ENCODE measurements at regions of chr2 and their contacts with region 1.

Region 1: DNA sequence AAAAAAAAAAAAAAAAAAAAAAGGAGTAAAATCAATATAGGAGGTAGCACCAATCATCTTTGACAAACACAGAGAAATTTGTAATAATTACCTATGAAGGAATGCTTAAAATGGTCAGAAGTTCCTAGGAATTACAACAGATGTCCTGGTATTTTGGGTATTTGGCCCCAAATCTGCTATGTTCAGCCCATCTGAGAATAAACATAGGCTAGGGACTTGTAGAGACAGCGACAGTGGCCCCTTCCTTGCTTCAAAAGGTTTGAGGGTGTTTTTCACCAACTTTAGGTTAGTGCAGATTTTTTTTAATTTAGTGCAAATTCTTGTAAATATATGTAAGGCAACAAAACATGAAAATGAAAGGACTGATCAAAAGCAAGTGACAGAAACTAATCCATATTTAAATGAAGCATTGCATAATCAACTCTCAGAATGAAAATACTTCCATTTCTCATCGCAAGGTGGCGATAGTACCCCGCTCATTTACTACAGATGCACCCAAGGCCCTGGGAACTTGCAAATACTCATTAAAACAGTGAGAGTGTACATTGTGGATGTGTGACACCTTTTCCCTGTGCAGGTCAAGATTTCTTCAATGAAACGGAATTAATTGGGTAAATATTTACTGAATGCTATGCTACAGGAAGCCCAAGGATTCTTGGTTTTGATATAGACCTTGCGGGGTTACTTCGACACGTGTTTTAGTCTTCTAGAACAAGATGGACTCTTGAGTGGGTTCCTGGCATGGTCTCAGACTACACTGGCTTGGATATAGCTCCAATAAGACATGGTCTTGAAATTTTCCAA is 44.6 kb downstream of the FAM124B start:
- DNase-seq: peak in 2 of 10 donors; percentile 34 to 60
- H3K4me3 ChIP-seq: no peak overlapping the region
- H3K27ac ChIP-seq: no peak overlapping the region
- H3K27me3 ChIP-seq: no peaks in the 10 kb centered on the region
- CTCF ChIP-seq: peak; percentile 80 to 98 (median 90)

Region 2: DNA sequence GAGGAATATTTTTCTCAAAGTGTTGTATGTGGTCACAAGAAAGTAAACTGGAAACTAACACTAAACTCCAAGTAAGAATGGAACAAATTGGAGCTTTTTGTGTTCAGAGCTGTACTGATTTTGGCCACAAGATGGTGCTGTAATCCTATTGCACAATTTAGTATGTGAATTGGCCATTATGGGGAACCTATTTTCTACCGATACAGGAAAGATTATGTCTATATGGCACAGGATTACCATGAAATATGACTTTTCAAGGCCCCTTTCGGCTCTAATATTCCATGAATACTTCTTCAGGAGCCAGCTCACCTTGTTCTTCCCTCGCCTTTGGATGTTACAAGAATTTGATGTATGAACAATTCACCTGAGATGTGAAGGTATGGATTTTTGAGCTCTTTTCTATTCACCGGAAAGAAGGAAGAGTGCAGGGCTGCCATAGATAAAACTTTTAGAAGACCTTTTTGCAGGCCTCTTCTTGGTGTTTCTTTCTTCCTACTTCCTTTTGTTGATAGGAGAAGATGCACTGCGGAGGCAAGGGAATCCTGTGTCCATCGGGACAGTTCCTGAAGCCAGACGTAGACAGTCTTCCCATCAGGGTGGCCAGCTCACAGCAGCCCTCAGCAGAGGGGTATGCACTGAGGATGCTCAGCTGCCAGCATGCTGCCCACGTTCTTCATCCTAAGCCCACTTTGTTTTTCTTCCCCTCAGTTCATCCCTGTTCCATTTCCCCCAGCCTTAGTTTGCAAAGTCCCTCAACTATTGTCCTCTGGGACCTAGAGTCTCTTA is 386.8 kb before region 1 on chr2:
- intact Hi-C with region 1: loop called in 1 of 2 experiments (anchors 5 kb)
- DNase-seq: peak in 2 of 10 donors; percentile 23 to 43
- H3K4me3 ChIP-seq: no peak overlapping the region
- H3K27ac ChIP-seq: no peak overlapping the region
- H3K27me3 ChIP-seq: no peaks in the 10 kb centered on the region
- CTCF ChIP-seq: peak; percentile 83 to 99 (median 96)

Region 3: DNA sequence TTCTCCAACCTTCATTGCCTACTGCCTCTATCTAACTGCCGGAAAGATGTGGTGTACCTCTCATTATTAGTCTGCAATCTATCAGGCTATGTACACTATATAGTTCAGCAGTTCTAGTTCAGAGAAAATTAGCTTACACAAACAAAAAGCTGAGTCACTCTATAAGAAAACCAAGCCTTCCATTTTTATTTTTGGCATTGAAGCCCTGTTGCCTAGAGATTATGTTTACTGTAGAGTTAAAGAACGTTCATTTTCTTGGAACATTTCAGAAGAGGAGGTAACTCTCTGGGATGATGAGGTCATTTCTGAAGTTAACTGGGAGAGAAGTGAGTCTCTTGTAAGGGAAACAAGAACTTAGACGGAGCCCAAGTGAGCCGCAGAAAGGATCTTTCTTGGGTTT is 88.9 kb before region 1 on chr2:
- intact Hi-C with region 1: no loop called
- DNase-seq: no peak
- H3K4me3 ChIP-seq: no peak overlapping the region
- H3K27ac ChIP-seq: no peak overlapping the region
- H3K27me3 ChIP-seq: no peaks in the 10 kb centered on the region
- CTCF ChIP-seq: no peak

Region 4: DNA sequence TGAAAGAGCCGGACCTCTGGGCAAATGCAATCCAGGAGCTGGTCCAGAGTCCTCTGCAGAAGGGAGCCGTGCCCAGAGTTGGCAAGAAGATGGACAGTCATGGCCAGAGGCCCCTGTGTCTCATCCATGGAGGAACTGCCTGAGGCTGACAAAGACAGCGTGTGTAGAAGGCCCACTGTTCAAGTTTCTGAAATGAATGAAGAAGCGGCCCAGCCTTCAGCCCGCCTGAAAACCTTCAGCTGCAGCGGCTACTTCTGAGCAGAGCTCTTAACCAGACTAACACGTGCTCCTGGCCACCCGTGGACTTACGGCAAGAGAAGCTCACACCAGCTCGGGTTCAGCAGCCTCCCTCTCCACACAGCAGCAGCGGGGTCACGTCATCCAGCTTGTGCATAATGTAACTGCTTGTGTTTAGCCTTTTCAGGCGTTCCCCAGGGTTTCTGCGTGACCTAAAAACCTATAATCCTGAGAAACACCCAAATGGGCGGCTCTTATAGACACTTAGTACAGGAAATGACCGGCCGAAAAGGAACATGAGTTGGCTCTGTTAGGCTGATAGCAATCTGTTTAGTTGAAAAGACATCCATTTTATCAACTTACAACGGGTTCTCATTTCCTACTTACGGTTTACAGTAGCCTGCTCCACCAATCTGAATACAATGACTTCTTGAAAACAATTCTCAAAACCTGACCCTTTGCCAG is 44.5 kb after region 1 on chr2 and contains the start of gene FAM124B:
- intact Hi-C with region 1: no loop called
- DNase-seq: peak in 4 of 10 donors; percentile 23 to 43 (median 37)
- H3K4me3 ChIP-seq: peak within 1 kb of the TSS in 56 of 59 donors; percentile 0 to 59 (median 37)
- H3K27ac ChIP-seq: peak within 1 kb of the TSS in 5 of 59 donors; percentile 3 to 41 (median 11)
- H3K27me3 ChIP-seq: no peaks in the 10 kb centered on the region
- CTCF ChIP-seq: no peak
- total RNA-seq, gene FAM124B: 0.26 to 3.3 (median 0.89) TPM in 119 of 120 experiments, not detected in the other

Region 5: DNA sequence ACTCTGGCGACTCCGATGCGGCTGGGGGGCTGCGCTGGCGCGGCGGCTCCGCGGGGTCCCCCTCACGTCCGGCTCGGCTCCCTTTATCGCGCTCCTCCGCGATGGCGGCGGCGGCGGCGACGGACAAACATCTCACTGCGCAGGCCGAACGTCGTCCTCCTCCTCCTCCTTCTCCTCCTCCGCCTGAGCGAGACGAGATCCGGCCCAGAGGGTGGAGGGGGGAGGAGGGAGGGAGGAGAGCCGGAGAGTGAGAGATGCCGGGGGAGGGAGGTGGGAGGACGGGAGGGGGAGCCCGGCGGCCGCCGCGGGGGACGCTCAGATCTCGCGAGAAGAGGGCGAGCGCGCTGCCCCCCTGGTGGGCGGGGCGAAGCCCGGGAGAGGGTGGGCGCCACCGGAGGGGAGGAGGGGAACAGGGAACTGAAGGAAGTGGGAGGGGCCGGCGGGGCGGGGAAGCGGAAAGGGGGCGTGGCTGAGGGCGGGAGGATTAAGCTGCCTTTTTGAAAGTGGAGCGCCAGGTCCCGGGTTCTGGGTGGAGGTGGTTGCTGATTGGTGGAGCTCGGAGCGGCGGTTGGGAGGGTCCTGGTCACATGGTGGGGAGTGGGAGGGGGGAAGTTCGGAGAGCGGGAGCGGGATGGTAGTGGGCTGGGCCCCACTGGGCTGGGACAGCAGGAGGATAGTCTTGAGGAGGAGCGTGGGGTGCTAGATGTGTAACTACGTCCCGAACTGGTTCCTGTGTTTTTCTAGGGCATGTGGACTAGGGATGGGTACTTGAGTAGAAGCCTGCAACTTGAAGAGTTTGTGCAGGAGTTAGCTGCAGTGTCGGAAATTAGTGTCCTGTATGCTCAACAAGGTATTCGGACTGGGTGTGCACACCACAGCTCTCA is 228.1 kb after region 1 on chr2 and contains the start of gene CUL3:
- intact Hi-C with region 1: loop called in 1 of 2 experiments (anchors 5 kb)
- DNase-seq: peak; percentile 97 to 99 (median 98)
- H3K4me3 ChIP-seq: peak within 1 kb of the TSS; percentile 55 to 92 (median 80)
- H3K27ac ChIP-seq: peak within 1 kb of the TSS in 57 of 59 donors; percentile 26 to 96 (median 84)
- H3K27me3 ChIP-seq: no peaks in the 10 kb centered on the region
- CTCF ChIP-seq: peak in 12 of 56 donors; percentile 1 to 34 (median 13)
- total RNA-seq, gene CUL3: 48.5 to 114 (median 84.5) TPM

Region 6: DNA sequence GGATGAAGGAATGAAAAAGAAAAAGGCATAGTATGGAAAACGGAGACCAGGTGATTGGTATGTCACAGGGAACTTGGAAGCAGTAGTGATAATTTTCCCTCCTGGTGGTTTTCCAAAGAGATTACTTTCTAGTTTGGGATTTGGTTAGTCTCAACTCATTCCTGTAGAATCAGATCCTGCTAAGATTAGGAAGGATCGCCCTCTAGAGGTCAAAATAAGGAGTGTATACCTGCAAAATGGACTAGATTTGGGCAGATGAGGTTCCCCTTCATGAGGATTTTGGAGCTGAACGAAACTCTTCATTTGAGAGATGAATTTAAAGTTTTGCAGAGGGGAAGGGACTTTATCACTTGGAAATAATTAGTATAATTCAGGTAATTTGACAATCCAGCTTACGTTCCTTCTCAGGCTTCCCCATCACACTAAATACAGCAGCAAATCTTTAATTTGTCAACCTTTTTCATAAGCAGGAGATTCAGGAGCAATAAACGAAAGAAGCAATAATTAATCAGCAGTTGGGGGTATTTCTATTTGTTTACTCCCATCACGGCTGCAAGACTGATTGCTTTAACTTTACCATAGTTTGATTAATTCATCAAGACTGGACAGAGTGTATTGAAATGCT is 293.6 kb after region 1 on chr2:
- intact Hi-C with region 1: loop called (anchors 2 to 5 kb)
- DNase-seq: no peak
- H3K4me3 ChIP-seq: peak overlapping the region in 16 of 59 donors; percentile 10 to 43 (median 26)
- H3K27ac ChIP-seq: no peak overlapping the region
- H3K27me3 ChIP-seq: peaks cover 0 to 2% (median 0%) of the 10 kb centered on the region in 45 donors
- CTCF ChIP-seq: peak; percentile 72 to 96 (median 85)

Region 7: GRCh38 chr2:224778474-224778877 is 421.2 kb after region 1 on chr2:
- intact Hi-C with region 1: loop called (anchors 5 to 10 kb)
- DNase-seq: peak in 5 of 10 donors; percentile 12 to 70 (median 32)
- H3K4me3 ChIP-seq: no peak overlapping the region
- H3K27ac ChIP-seq: peak overlapping the region in 1 of 59 donors; percentile 30
- H3K27me3 ChIP-seq: no peaks in the 10 kb centered on the region
- CTCF ChIP-seq: peak; percentile 62 to 88 (median 79)

Region 8: DNA sequence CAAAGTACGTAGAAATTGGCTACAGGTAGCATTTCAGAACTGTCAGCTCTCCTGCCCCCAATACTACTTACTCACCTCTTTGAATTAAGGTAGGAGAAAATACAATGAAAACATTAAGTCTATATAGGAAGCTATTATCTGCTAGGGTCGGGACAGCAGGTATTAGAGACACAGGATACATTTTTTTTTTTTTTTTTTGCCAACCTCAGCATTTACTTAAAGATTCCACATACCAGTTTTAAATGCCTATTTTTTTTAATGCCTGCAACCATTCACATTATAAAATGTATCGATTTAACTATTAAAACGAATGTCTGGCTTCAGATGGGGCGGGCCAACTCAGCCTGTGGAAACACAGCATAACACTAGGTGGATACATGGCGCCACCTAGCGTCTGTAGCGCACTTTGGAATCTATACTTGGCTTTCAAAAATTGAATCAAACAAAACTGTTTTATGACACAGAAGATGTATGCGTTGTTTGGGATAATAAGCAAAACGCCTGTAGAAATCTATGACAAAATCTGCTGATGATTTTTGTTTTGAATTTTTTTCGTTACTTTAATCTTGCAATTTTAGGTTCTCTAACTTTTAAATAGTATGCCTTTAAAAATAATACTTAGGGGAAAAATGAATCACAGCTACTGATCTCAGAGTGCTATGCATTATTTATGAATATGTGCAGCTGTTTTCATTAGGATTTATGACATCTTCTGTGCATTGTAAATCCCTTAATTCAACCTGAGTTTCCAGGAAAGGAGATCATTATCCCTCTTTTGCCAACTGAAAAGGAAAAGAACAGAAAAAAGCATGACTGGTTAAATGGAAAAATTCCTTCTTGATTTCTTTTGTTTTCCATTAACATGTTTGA is 1303.2 kb after region 1 on chr2:
- intact Hi-C with region 1: loop called in 1 of 2 experiments (anchors 10 kb)
- DNase-seq: peak; percentile 73 to 92 (median 80)
- H3K4me3 ChIP-seq: no peak overlapping the region
- H3K27ac ChIP-seq: no peak overlapping the region
- H3K27me3 ChIP-seq: no peaks in the 10 kb centered on the region
- CTCF ChIP-seq: peak; percentile 77 to 97 (median 90)